Spleen (tissue), 13 donors: ENCODE measurements at regions of chr1 and their contacts with region 1.

Region 1: GRCh38 chr1:27603681-27604578 is at the start of gene AHDC1:
- DNase-seq: peak; percentile 98
- H3K4me3 ChIP-seq: peak within 1 kb of the TSS; percentile 65 to 98 (median 81)
- H3K27ac ChIP-seq: peak within 1 kb of the TSS; percentile 72 to 96 (median 88)
- H3K4me1 ChIP-seq: peaks cover 44 to 94% (median 80%) of the 10 kb centered on the region in 6 donors
- H3K27me3 ChIP-seq: peaks cover 0 to 13% (median 0%) of the 10 kb centered on the region in 7 donors
- CTCF ChIP-seq: peak in 5 of 11 experiments; percentile 12 to 37 (median 21)
- POLR2A ChIP-seq: peak; percentile 36 to 82 (median 72)
- total RNA-seq, gene AHDC1: 35.1 to 104 (median 54.6) TPM

Region 2: DNA sequence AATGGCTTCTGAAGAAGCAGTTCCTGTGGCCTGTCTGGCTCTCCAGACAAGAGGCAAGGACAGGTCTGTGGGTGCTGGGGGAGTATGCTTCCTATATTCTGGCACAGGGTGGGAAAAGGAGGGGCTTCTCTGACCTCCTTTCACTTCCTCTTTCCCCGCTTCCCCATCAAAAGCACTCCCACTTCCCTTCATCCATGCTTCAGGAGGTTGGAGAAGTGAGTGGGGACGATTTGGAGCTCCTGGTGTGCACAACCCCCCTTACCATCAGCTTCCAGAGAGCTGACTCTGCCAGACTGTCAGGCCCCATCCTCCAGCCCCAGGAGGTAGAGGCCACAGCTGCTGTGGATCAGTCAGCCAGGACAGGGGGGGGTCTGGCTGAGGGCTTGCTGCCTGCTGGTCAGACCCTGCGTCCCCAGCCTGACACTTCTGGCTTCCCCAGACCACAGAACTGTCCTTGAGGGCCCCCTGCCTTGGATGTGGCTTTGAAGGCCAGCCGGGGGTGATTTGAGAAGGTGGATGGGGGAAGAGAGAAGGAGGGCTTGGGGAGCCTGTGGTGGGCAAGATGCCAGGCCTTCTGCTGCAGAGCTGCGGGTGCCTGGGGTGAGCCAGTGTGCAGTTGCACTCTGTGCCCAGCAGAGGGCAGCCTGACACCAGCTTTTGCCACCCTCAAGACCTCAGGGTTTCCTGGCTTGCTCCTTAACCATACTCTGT is 303.4 kb before region 1 on chr1:
- intact Hi-C with region 1: loop called (anchors 2 kb)
- DNase-seq: peak; percentile 93
- H3K4me3 ChIP-seq: no peak overlapping the region
- H3K27ac ChIP-seq: peak overlapping the region; percentile 39 to 75 (median 66)
- H3K4me1 ChIP-seq: peaks cover 7 to 39% (median 19%) of the 10 kb centered on the region in 6 donors
- H3K27me3 ChIP-seq: no peaks in the 10 kb centered on the region
- CTCF ChIP-seq: peak; percentile 98 to 100 (median 99)
- POLR2A ChIP-seq: no peak

Region 3: GRCh38 chr1:27402349-27402754 is 201.6 kb before region 1 on chr1:
- intact Hi-C with region 1: loop called (anchors 5 kb)
- DNase-seq: peak; percentile 91
- H3K4me3 ChIP-seq: no peak overlapping the region
- H3K27ac ChIP-seq: peak overlapping the region in 7 of 8 donors; percentile 67 to 84 (median 75)
- H3K4me1 ChIP-seq: peaks cover 31 to 90% (median 57%) of the 10 kb centered on the region in 6 donors
- H3K27me3 ChIP-seq: no peaks in the 10 kb centered on the region
- CTCF ChIP-seq: peak in 10 of 11 experiments; percentile 46 to 70 (median 56)
- POLR2A ChIP-seq: no peak

Region 4: DNA sequence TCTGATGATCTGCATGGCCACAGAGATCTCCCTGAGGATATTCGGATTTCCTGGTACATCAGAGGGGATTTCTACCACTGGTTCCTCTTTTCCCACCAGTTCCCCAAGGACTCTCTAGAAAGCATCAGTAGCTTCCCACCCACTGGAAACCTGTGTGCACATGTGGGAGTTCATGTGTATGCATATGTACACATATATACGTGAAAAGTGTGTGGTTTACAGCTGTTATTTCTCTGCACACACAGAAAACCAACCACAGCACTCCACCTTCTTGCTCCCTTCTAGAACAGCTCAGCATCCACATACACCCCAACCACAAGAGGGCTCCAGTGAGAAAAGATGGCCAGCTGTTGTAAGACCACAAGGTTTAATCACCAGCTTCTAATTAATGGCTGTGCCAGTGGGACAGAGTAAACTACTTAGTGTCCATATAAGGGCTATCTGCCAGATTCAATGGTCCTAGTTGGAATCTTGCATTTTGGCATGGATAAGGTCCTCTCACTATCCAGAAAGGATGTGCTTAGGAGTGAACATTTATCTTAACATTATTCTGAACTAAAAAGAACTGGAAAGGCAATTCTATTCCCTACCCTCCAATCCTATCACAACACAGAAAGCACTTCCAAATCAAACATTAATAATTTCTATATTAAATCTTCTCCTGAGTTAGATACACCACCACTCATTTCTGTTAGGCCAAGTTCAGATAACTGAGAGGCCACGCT is 187.4 kb before region 1 on chr1:
- intact Hi-C with region 1: loop called (anchors 5 kb)
- DNase-seq: no peak
- H3K4me3 ChIP-seq: no peak overlapping the region
- H3K27ac ChIP-seq: peak overlapping the region in 7 of 8 donors; percentile 3 to 75 (median 54)
- H3K4me1 ChIP-seq: peaks cover 21 to 59% (median 50%) of the 10 kb centered on the region in 6 donors
- H3K27me3 ChIP-seq: no peaks in the 10 kb centered on the region
- CTCF ChIP-seq: peak; percentile 28 to 79 (median 70)
- POLR2A ChIP-seq: no peak

Region 5: DNA sequence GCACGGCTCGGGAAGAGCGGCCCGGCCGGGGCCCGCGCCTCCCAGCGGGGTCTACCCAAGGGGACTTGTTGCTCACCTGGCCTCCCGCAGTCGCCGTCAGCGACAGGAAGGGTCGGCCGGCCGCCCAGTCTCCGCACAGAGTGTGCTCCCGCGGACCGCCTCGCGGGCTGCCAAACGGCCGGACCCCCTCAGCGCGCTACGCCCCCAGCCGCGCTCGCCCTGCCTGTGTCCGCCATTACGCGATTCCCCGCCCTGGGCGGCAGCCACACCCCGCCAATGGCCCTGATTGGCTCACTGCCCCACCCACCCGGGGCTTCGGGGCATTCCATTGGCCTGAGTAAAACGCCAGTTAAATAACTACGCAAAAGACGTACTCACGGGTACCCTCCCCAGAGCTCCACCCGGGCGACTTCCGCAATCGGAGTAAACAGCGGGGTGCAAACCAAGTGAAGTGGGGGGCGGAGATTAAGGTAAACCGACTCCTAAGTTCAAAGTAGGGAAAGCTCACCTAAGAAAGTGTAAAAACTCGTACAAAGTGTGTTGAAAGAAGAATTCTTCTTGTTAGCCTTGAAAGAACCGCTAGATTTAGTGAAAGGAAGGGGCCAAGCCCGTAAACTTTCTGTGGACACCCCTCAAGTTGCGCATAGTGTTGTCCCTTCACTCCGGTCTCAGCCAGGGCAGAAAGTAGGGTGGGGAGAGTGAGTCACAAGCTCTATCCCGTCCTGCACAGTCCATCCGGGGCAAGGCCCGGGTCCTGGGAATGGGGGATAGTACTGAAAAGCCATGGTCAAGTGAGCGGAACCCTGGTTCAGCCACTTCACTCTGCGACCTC is 113.8 kb before region 1 on chr1 and contains the start of gene WASF2:
- intact Hi-C with region 1: loop called (anchors 10 kb)
- DNase-seq: peak; percentile 97
- H3K4me3 ChIP-seq: peak within 1 kb of the TSS; percentile 76 to 99 (median 93)
- H3K27ac ChIP-seq: peak within 1 kb of the TSS; percentile 97 to 100 (median 99)
- H3K4me1 ChIP-seq: peaks cover 47 to 70% (median 62%) of the 10 kb centered on the region in 6 donors
- H3K27me3 ChIP-seq: no peaks in the 10 kb centered on the region
- CTCF ChIP-seq: peak in 4 of 11 experiments; percentile 13 to 28 (median 24)
- POLR2A ChIP-seq: peak; percentile 76 to 91 (median 85)
- total RNA-seq, gene WASF2: 92.1 to 196 (median 129) TPM

Region 6: GRCh38 chr1:27563591-27564471 is 40.1 kb before region 1 on chr1:
- intact Hi-C with region 1: loop called (anchors 5 kb)
- DNase-seq: no peak
- H3K4me3 ChIP-seq: no peak overlapping the region
- H3K27ac ChIP-seq: peak overlapping the region; percentile 29 to 96 (median 71)
- H3K4me1 ChIP-seq: peaks cover 29 to 100% (median 83%) of the 10 kb centered on the region in 6 donors
- H3K27me3 ChIP-seq: no peaks in the 10 kb centered on the region
- CTCF ChIP-seq: no peak
- POLR2A ChIP-seq: no peak